Naive thymus-derived CD8-positive, alpha-beta T cell (primary cell): ENCODE measurements at regions of chr6 and their contacts with region 1.

Region 1: GRCh38 chr6:26045065-26045927 is 41.9 kb upstream of the HFE start:
- DNase-seq: peak; percentile 45 to 95 (median 86)
- ATAC-seq: peak; percentile 58 to 63
- H3K4me3 Mint-ChIP-seq: peak overlapping the region; percentile 90 to 97 (median 92)
- H3K27ac Mint-ChIP-seq: peak overlapping the region; percentile 90 to 99 (median 96)
- H3K4me1 Mint-ChIP-seq: peaks cover 8 to 28% (median 14%) of the 10 kb centered on the region in 4 donors
- H3K27me3 Mint-ChIP-seq: no peaks in the 10 kb centered on the region

Region 2: GRCh38 chr6:25874822-25875562 is 170.3 kb before region 1 on chr6:
- POLR2A ChIA-PET with region 1: no interaction called
- DNase-seq: no peak
- ATAC-seq: peak; percentile 46 to 64
- H3K4me3 Mint-ChIP-seq: no peak overlapping the region
- H3K27ac Mint-ChIP-seq: no peak overlapping the region
- H3K4me1 Mint-ChIP-seq: peaks cover 5 to 20% (median 17%) of the 10 kb centered on the region in 4 donors
- H3K27me3 Mint-ChIP-seq: peaks cover 0 to 3% (median 0%) of the 10 kb centered on the region in 5 donors

Region 3: DNA sequence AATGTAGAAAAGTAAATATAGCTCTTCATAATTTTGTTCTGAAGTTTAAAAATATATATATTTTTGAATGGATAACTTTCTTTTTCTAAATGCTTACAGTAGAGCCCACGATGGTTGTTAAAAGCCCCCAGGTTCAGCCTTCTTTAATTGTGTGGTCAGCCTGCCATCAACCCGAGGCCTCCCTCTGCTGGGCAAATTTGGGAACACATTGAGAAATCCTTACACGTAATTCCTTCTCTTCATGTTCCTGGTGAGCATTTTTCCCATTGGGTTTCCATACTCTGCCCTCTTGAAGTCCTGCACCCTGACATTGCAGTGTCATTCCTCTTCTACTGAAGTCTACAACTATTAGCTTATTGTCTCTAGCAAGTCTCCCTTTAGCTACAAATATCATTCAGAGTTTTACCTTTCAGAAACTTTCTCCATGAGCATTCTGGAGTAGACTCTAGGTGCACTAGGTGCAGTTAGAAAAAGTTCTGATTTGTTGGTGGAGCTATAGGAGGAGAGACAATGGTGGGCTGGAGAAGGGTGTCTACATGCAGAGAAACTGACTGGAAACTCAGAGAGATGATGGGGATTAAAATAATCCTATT is 42.1 kb before region 1 on chr6:
- POLR2A ChIA-PET with region 1: no interaction called
- DNase-seq: peak; percentile 15 to 72 (median 42)
- ATAC-seq: peak; percentile 54 to 58
- H3K4me3 Mint-ChIP-seq: no peak overlapping the region
- H3K27ac Mint-ChIP-seq: no peak overlapping the region
- H3K4me1 Mint-ChIP-seq: peaks cover 0 to 8% (median 4%) of the 10 kb centered on the region in 4 donors
- H3K27me3 Mint-ChIP-seq: no peaks in the 10 kb centered on the region

Region 4: GRCh38 chr6:26071135-26071534 is 25.8 kb after region 1 on chr6:
- POLR2A ChIA-PET with region 1: no interaction called
- DNase-seq: no peak
- ATAC-seq: no peak
- H3K4me3 Mint-ChIP-seq: no peak overlapping the region
- H3K27ac Mint-ChIP-seq: peak overlapping the region in 1 of 10 donors; percentile 5
- H3K4me1 Mint-ChIP-seq: peaks cover 0 to 2% (median 0%) of the 10 kb centered on the region in 4 donors
- H3K27me3 Mint-ChIP-seq: peaks cover 0 to 2% (median 0%) of the 10 kb centered on the region in 5 donors

Region 5: GRCh38 chr6:26087284-26088115 is 42.2 kb after region 1 on chr6 and contains the start of gene HFE:
- POLR2A ChIA-PET with region 1: interaction called, 11 read pairs
- DNase-seq: peak in 6 of 10 donors; percentile 14 to 43 (median 32)
- ATAC-seq: peak in 1 of 2 donors; percentile 29
- H3K4me3 Mint-ChIP-seq: peak within 1 kb of the TSS; percentile 84 to 93 (median 88)
- H3K27ac Mint-ChIP-seq: peak within 1 kb of the TSS in 9 of 10 donors; percentile 74 to 92 (median 86)
- H3K4me1 Mint-ChIP-seq: peaks cover 12 to 56% (median 29%) of the 10 kb centered on the region in 4 donors
- H3K27me3 Mint-ChIP-seq: no peaks in the 10 kb centered on the region
- polyA plus RNA-seq, gene HFE: 0.68 to 3.8 (median 1.8) TPM

Region 6: GRCh38 chr6:26183581-26184366 is 138.5 kb after region 1 on chr6:
- POLR2A ChIA-PET with region 1: interaction called, 10 read pairs
- DNase-seq: peak; percentile 22 to 82 (median 58)
- ATAC-seq: peak; percentile 92 to 94
- H3K4me3 Mint-ChIP-seq: peak overlapping the region; percentile 93 to 100 (median 98)
- H3K27ac Mint-ChIP-seq: peak overlapping the region; percentile 70 to 98 (median 95)
- H3K4me1 Mint-ChIP-seq: peaks cover 27 to 48% (median 46%) of the 10 kb centered on the region in 4 donors
- H3K27me3 Mint-ChIP-seq: no peaks in the 10 kb centered on the region

Region 7: DNA sequence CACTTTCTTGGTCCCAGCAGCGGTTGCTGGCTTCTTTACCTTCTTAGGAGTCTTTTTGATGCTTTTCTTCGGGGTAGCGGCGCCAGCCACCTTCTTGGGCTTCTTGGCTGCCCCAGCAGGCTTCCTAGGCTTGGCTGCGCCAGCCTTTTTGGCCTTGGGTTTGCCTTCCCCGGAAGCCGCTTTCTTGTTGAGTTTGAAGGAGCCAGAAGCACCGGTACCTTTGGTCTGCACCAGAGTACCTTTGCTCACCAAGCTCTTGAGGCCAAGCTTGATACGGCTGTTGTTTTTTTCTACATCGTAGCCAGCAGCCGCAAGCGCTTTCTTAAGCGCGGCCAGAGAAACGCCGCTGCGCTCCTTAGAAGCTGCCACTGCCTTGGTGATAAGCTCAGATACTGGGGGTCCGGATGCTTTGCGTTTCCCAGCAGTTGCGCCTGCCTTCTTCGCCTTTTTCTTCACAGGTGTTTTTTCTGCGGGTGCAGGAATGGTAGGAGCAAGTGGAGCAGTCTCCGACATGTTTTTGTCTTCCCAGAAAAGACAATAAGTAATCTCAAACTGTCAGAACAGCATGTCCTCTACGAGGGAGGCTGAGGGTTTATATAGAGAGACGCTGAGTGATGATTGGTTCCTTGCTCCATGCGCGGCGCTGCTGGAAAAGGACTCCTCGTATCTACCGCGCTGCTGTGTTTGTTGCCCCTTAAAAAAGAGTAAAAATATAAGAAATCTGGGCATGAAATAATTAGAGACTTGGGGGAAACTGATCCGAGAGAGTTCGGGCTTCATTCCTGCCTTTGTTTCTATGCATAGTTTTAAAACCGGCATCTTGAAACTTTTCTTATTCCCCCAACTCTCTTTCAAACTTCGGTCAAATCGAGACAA is 189.4 kb after region 1 on chr6:
- POLR2A ChIA-PET with region 1: interaction called, 26 read pairs
- DNase-seq: peak; percentile 41 to 91 (median 86)
- ATAC-seq: peak; percentile 69
- H3K4me3 Mint-ChIP-seq: peak overlapping the region; percentile 91 to 99 (median 95)
- H3K27ac Mint-ChIP-seq: peak overlapping the region; percentile 95 to 100 (median 97)
- H3K4me1 Mint-ChIP-seq: peaks cover 12 to 37% (median 32%) of the 10 kb centered on the region in 4 donors
- H3K27me3 Mint-ChIP-seq: no peaks in the 10 kb centered on the region

Region 8: DNA sequence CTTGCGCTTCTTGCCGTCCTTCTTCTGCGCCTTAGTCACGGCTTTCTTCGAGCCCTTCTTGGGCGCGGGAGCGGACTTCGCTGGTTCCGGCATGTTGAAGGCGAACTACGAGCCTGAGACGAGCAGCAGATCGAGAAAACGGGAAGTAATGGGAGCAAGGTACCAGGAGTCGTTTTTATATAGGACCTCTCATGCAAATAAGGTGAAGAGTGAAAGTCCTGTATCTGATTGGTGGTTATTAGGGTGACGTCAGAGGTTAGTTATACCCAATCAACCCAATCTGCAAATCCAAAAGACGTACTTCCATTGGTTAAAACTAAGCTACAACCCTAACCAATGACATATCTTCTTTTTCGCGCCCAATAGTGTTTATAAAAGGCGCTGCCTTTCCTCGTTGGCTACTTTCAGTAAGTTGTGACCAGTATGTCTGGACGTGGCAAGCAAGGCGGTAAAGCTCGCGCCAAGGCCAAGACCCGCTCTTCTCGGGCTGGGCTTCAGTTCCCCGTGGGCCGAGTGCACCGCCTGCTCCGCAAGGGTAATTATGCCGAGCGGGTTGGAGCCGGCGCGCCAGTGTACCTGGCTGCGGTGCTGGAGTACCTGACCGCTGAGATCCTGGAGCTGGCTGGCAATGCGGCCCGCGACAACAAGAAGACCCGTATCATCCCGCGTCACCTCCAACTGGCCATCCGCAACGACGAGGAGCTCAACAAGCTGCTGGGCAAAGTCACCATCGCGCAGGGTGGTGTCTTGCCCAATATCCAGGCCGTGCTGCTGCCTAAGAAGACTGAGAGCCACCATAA is 1101.6 kb after region 1 on chr6:
- POLR2A ChIA-PET with region 1: interaction called, 20 read pairs
- DNase-seq: peak; percentile 37 to 94 (median 82)
- ATAC-seq: peak; percentile 85 to 88
- H3K4me3 Mint-ChIP-seq: no peak overlapping the region
- H3K27ac Mint-ChIP-seq: no peak overlapping the region
- H3K4me1 Mint-ChIP-seq: peaks cover 3 to 25% (median 12%) of the 10 kb centered on the region in 4 donors
- H3K27me3 Mint-ChIP-seq: no peaks in the 10 kb centered on the region

Region 9: DNA sequence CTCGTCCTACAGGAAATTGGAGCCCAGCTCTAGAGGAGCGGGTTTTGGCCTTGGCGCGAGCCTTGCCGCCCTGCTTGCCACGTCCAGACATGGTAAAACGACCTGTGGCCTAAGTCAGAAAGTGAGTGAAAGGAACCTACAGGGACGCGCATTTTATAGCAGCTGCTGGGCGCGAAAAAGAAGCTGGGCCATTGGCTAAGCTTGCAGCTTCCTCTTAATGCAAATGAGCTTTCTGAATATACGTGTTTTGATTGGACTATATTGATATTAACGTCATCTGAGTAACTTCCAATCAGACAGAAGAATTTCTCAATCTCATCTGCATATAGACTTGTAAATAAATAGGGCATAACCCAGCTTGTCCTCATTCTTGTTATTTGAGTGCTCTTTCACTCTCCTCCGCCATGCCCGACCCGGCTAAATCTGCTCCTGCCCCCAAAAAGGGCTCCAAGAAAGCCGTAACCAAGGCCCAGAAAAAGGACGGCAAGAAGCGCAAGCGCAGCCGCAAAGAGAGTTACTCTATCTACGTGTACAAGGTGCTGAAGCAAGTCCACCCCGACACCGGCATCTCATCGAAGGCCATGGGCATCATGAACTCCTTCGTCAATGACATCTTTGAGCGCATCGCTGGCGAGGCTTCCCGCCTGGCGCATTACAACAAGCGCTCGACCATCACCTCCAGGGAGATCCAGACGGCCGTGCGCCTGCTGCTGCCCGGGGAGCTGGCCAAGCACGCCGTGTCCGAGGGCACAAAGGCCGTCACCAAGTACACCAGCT is 1848.0 kb after region 1 on chr6:
- POLR2A ChIA-PET with region 1: interaction called, 17 read pairs
- DNase-seq: peak; percentile 69 to 96 (median 90)
- ATAC-seq: peak; percentile 72 to 78
- H3K4me3 Mint-ChIP-seq: no peak overlapping the region
- H3K27ac Mint-ChIP-seq: no peak overlapping the region
- H3K4me1 Mint-ChIP-seq: peaks cover 7 to 38% (median 28%) of the 10 kb centered on the region in 4 donors
- H3K27me3 Mint-ChIP-seq: no peaks in the 10 kb centered on the region